Left colon (tissue), 2 donors: ENCODE measurements at regions of chr7 and their contacts with region 1.

Region 1: GRCh38 chr7:120303105-120303504 is 30.1 kb downstream of the KCND2 start:
- DNase-seq: no peak
- ATAC-seq: no peak

Region 2: GRCh38 chr7:120131096-120131839 is 171.8 kb before region 1 on chr7:
- intact Hi-C with region 1: loop called in 1 of 2 experiments (anchors 5 kb)
- DNase-seq: no peak
- ATAC-seq: no peak

Region 3: DNA sequence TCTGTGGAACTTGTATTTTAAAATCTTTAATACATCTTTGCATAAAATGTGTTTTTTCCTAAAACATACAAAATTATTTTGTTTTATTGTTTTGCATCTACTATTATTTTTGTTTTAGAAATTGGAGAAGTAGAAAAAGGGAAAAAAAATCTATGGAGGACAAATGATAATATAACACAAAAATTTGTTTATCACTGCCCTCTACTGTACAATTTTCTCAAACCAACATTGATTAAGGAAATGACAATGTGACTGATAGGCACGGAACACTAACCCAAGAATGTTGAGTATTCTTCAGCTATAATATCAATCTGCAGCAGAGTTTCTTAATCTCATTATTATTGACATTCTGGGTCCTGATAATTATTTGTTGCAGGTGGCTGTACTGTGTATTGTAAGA is 638.0 kb after region 1 on chr7:
- intact Hi-C with region 1: no loop called
- DNase-seq: no peak
- ATAC-seq: peak; percentile 65